Dendritic cell treated with granulocyte-macrophage colony-stimulating factor and Interleukin-4, amounts not matched to agents 40 ng/mL and 50 ng/mL, for 4 days (primary cell): ENCODE measurements at regions of chr7 and their contacts with region 1.

Region 1: GRCh38 chr7:30214651-30215137 is 69.7 kb upstream of the ZNRF2 start:
- H3K4me3 Mint-ChIP-seq: no peak overlapping the region
- H3K27ac Mint-ChIP-seq: no peak overlapping the region
- H3K4me1 Mint-ChIP-seq: peaks cover 29% of the 10 kb centered on the region
- H3K27me3 Mint-ChIP-seq: no peaks in the 10 kb centered on the region

Region 2: DNA sequence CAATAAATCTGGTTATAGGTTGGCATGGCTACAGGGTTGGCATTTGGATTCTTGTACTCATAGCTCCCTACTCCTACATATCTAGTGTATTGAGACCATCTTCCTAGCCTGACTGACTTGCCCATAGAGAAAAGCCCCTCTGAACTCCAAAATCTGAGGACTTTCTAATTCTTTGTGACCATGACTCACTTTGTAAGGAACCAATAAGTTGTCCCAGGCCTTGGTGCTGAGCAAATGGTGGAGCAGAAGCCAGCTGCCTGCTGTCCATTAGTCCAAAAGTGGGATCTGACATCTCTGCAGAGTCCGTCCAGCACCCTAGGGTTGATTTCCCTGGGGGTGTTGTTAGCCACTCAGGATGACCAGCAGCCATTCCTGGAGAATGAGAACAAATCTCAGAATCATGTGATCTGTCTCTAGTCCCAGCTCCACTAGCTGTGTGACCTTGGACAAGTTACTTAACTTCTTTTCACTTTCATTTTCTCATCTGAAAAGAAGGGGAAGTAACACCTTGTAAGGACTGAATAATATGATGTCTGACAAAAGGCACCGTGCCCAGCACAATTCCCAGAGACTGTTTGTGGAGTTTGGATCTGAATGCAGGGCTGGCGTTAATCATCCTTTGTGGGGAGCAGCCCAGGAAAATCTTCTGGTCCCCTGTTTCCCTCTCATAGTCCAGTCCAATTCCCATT is 35.8 kb before region 1 on chr7:
- intact Hi-C with region 1: loop called (anchors 5 kb)
- H3K4me3 Mint-ChIP-seq: no peak overlapping the region
- H3K27ac Mint-ChIP-seq: peak overlapping the region; percentile 73
- H3K4me1 Mint-ChIP-seq: peaks cover 75% of the 10 kb centered on the region
- H3K27me3 Mint-ChIP-seq: no peaks in the 10 kb centered on the region